ENCODE measurements at regions of chr6 and their contacts with region 1.

Region 1: DNA sequence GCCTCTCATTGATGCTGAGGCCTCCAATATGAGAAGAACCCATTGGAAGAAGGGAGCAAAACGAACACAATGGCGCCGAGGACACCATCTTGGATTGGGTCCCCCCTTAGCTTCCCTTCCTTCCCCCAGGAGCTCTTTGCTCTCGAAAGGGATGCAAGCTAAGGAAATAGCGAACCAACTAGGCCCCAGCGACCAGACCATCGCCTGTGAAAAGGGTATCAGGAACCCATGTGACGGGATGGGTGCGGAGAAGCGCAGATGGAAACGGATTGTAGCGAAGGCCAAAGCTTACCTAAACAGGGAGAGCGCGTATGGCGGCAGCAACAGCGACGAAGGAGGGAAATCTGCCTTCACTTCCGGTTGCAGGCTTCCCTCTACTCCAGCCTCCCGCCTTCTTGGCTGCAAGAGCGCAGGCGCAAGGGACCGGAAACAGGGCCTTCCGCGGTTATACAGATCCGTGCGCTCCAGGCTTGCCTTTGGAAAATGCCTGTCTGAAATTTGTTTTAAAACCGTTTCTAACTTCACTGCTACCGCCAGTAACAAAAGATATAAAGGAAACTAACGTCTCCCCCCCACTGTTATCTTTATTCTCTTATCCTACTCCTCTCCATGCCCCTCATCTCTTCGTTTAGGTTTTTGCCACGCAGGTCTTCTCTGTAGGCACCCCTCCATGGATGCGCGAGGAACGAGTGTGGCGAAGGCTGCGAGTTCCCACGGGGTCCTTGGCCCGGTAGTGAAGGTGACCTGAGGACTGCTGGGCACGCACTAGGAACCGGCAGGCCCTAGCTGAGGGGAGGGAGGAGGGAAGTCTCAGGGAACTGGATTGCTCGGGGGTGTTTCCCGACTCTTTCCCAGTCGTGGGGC is at the start of gene DDX39B:
- DNase-seq: peak; percentile 95

Region 2: GRCh38 chr6:31525932-31526591 is 15.8 kb before region 1 on chr6:
- CTCF ChIA-PET with region 1: interaction called, 3 read pairs
- POLR2A ChIA-PET with region 1: interaction called, 114 read pairs
- DNase-seq: no peak

Region 3: GRCh38 chr6:31558631-31559500 is 17.0 kb after region 1 on chr6:
- CTCF ChIA-PET with region 1: no interaction called
- POLR2A ChIA-PET with region 1: no interaction called
- DNase-seq: no peak

Region 4: GRCh38 chr6:31580807-31581433 is 39.0 kb after region 1 on chr6:
- CTCF ChIA-PET with region 1: no interaction called
- POLR2A ChIA-PET with region 1: interaction called, 14 read pairs
- DNase-seq: peak; percentile 96

Region 5: GRCh38 chr6:31619805-31620585 is 78.1 kb after region 1 on chr6:
- CTCF ChIA-PET with region 1: interaction called, 3 read pairs
- POLR2A ChIA-PET with region 1: interaction called, 15 read pairs
- DNase-seq: peak; percentile 98

Region 6: DNA sequence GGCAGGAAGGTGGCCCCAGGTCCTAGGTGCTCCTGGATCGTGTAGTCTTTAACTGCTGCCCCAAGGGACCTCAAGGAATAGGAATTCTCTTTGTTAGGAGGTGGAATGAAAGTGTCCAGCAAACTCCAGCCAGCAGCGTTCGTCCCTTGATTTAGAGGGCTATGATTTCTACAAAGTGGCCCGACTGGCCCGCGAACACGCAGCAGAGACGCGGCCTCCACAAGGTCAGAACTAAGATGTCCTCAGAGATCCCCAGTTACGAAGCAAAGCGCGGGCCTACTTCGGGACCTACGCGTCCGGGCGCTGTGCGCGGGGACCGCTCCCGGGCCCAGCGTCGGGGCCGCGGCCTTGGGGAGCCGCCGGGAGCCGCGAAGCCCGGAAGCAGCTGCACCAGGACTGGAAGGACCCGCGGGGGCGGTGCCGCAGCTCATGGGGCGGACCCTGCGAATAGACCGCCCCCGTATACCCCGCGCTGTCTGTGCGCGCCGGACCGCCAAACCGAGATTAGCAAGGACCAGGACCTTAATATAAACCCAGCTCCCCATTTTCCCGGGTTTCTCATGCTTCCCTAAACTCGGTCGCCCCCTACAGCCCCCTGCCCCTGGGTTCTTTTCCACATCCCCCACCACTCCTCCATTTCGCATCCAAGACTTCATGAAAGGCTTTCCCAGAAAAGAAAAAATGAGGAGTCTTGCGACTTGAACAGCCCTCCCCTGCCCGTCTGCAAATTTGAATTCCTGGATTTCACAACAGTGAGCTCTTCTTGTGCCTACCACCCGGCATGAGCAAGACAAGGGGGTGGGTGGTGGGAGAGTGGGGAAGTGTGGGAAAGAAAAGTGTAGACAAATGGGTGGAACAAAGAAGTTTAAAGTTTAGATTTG is 118.7 kb after region 1 on chr6 and contains the start of gene C6orf47:
- CTCF ChIA-PET with region 1: no interaction called
- POLR2A ChIA-PET with region 1: interaction called, 16 read pairs
- DNase-seq: peak; percentile 79

Measured in HEK293T (cell line).